PC-9 (cell line): ENCODE measurements at regions of chr1 and their contacts with region 1.

Region 1: DNA sequence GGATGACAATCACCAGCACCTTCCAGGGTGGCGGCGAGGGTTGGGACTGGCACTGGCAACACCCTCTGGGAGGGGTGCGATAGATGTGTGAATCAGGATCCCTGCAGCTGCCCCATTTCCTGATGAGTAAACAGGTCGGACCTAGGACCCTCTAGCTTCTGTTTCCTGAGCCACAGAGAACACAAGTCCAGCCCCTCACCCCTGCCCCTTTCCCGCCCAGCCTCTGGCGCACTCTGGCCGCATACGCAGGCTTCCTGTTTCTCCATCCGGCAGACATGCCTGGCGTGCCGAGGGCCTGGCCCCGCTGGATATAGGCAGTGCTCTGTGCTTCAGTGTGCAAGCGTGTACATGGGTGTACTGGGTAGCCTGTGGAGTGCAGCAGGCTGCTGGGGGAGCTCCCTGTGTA is 4.6 kb downstream of the PEAR1 start:
- DNase-seq: peak in 1 of 2 experiments; percentile 60
- H3K4me3 ChIP-seq: no peak overlapping the region
- H3K27ac ChIP-seq: peak overlapping the region; percentile 92; the same call in 1 of the 2 replicates
- H3K4me1 ChIP-seq: peaks cover 39% of the 10 kb centered on the region
- H3K27me3 ChIP-seq: no peaks in the 10 kb centered on the region
- CTCF ChIP-seq: no peak

Region 2: GRCh38 chr1:156746728-156747631 is 151.2 kb before region 1 on chr1:
- CTCF ChIA-PET with region 1: no interaction called
- POLR2A ChIA-PET with region 1: no interaction called
- intact Hi-C with region 1: loop called (anchors 1 kb)
- DNase-seq: peak; percentile 89 to 96
- H3K4me3 ChIP-seq: peak overlapping the region; percentile 95
- H3K27ac ChIP-seq: peak overlapping the region; percentile 93
- H3K4me1 ChIP-seq: peaks cover 28% of the 10 kb centered on the region
- H3K27me3 ChIP-seq: no peaks in the 10 kb centered on the region
- CTCF ChIP-seq: peak; percentile 42; the same call in 1 of the 2 replicates

Region 3: GRCh38 chr1:157073944-157074767 is 176.0 kb after region 1 on chr1:
- CTCF ChIA-PET with region 1: no interaction called
- POLR2A ChIA-PET with region 1: interaction called, 10 read pairs
- intact Hi-C with region 1: loop called (anchors 10 kb)
- DNase-seq: peak in 1 of 2 experiments; percentile 54
- H3K4me3 ChIP-seq: no peak overlapping the region
- H3K27ac ChIP-seq: no peak overlapping the region
- H3K4me1 ChIP-seq: no peaks in the 10 kb centered on the region
- H3K27me3 ChIP-seq: peaks cover 3% of the 10 kb centered on the region; the same call in 1 of the 2 replicates
- CTCF ChIP-seq: peak; percentile 57